ENCODE measurements at regions of chr1 and their contacts with region 1.

Region 1: DNA sequence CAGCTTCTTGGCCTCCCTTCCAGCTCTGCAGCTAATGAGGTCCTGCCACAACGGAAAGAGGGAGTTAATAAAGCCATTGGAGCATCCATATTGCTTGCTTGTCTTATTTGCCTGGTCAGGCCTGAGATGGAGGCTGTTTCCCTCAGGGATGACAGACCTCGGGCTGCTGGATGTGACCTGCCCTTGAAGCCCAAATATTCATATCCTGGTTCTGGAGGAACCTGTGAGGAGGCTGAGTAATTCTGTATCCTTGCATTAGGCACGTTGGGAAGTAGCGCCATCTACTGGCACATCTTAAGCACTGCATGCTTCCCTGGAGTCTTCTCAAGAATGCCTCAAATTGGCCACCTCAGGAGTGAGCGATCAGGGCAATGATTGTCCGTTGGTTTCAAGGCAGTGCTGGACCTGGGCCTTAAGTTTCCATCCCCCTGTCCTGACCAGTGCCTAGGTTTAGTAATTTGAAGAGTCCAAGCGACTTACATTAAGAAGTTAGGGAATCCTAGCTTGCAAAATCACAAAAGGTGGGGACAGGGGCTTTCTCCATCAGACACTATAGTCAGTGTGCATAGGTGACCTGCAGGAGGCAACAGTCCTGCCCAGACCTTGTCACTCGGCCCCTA is 13.8 kb upstream of the NASP start:
- DNase-seq: peak; percentile 79 to 89
- H3K4me3 ChIP-seq: no peak overlapping the region
- H3K27ac ChIP-seq: no peak overlapping the region
- H3K4me1 ChIP-seq: peaks cover 0 to 22% (median 5%) of the 10 kb centered on the region in 4 donors
- H3K27me3 ChIP-seq: no peaks in the 10 kb centered on the region
- CTCF ChIP-seq: peak in 6 of 7 experiments; percentile 95 to 99 (median 97)
- EP300 ChIP-seq: no peak
- POLR2A ChIP-seq: no peak

Region 2: GRCh38 chr1:45339789-45340570 is 230.1 kb before region 1 on chr1 and contains the starts of genes MUTYH and TOE1:
- intact Hi-C with region 1: no loop called
- DNase-seq: peak; percentile 94 to 97
- H3K4me3 ChIP-seq: peak within 1 kb of the TSS; percentile 69 to 82 (median 71)
- H3K27ac ChIP-seq: peak within 1 kb of the TSS; percentile 91 to 98 (median 93)
- H3K4me1 ChIP-seq: peaks cover 20 to 61% (median 45%) of the 10 kb centered on the region in 4 donors
- H3K27me3 ChIP-seq: no peaks in the 10 kb centered on the region
- CTCF ChIP-seq: peak in 1 of 7 experiments; percentile 16
- EP300 ChIP-seq: no peak
- POLR2A ChIP-seq: peak in 1 of 4 donors; percentile 65
- total RNA-seq, gene MUTYH: 11.6 to 88.7 (median 19.1) TPM
- total RNA-seq, gene TOE1: 0.87 to 31.5 (median 8.8) TPM

Region 3: DNA sequence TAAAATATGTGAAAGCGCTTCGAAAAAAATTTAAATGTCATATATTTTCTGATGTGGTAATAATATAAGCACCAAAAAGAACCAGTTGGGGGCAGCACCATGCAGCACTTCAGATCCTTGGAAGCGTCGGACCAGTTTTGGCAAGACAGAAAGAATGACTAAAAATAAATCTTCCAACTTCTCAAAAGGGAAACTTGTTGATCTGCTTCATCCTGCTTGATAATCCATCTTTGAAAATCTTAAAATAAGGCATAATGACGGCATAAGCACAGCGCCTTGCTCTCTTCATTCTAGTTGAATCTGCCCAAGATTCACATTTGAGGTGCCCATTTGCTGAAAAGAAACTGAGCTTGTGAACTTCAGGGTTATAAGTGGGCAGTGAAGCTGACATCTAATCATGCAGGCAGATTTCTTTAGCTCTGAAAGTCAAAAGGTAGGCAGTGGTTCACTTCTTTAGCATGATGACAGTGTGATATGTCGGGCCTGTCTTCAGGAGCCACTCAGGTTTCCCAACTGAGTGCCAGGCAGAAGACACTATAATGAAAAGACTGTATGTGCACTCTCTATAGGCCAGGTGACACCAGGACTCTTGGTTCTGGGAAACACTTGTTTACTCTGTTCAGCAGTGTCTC is 210.1 kb before region 1 on chr1:
- intact Hi-C with region 1: loop called (anchors 5 kb)
- DNase-seq: peak; percentile 69 to 89
- H3K4me3 ChIP-seq: no peak overlapping the region
- H3K27ac ChIP-seq: peak overlapping the region; percentile 42 to 73 (median 70)
- H3K4me1 ChIP-seq: peaks cover 10 to 27% (median 16%) of the 10 kb centered on the region in 4 donors
- H3K27me3 ChIP-seq: no peaks in the 10 kb centered on the region
- CTCF ChIP-seq: peak in 5 of 7 experiments; percentile 19 to 73 (median 60)
- EP300 ChIP-seq: no peak
- POLR2A ChIP-seq: no peak

Region 4: GRCh38 chr1:45508295-45509151 is 61.5 kb before region 1 on chr1:
- intact Hi-C with region 1: loop called (anchors 5 kb)
- DNase-seq: no peak
- H3K4me3 ChIP-seq: no peak overlapping the region
- H3K27ac ChIP-seq: peak overlapping the region in 3 of 5 donors; percentile 32 to 42 (median 37)
- H3K4me1 ChIP-seq: peaks cover 0 to 23% (median 8%) of the 10 kb centered on the region in 4 donors
- H3K27me3 ChIP-seq: no peaks in the 10 kb centered on the region
- CTCF ChIP-seq: no peak
- EP300 ChIP-seq: no peak
- POLR2A ChIP-seq: no peak

Region 5: DNA sequence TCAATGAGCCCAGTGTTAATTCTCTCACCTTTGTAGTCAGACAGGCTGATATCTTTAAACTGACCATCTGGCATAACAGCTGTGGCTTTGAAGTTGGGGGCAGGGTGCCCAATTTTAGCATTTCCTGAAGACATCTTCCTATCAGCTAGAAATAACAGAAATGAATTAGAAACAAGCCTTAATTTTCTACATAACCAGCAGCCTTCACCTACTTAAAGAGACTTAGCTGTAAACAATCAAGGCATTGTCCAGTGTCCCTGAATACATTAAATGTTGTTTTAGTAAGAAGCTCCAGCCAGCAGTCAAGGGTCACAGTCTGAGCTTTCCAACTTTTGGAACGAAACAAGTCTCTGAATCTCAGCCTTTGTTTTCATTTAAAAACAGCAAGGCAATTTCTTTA is 51.2 kb before region 1 on chr1:
- intact Hi-C with region 1: loop called (anchors 5 kb)
- DNase-seq: no peak
- H3K4me3 ChIP-seq: peak overlapping the region in 2 of 4 donors; percentile 92 to 96
- H3K27ac ChIP-seq: peak overlapping the region in 2 of 5 donors; percentile 9 to 32
- H3K4me1 ChIP-seq: peaks cover 16 to 54% (median 36%) of the 10 kb centered on the region in 4 donors
- H3K27me3 ChIP-seq: no peaks in the 10 kb centered on the region
- CTCF ChIP-seq: no peak
- EP300 ChIP-seq: no peak
- POLR2A ChIP-seq: no peak

Region 6: GRCh38 chr1:45815667-45816458 is 245.8 kb after region 1 on chr1:
- intact Hi-C with region 1: no loop called
- DNase-seq: no peak
- H3K4me3 ChIP-seq: no peak overlapping the region
- H3K27ac ChIP-seq: no peak overlapping the region
- H3K4me1 ChIP-seq: no peaks in the 10 kb centered on the region
- H3K27me3 ChIP-seq: no peaks in the 10 kb centered on the region
- CTCF ChIP-seq: no peak
- EP300 ChIP-seq: no peak
- POLR2A ChIP-seq: no peak

Measured in stomach (tissue), 19 donors.